Aorta (tissue), 5 donors: ENCODE measurements at regions of chr11 and their contacts with region 1.

Region 1: DNA sequence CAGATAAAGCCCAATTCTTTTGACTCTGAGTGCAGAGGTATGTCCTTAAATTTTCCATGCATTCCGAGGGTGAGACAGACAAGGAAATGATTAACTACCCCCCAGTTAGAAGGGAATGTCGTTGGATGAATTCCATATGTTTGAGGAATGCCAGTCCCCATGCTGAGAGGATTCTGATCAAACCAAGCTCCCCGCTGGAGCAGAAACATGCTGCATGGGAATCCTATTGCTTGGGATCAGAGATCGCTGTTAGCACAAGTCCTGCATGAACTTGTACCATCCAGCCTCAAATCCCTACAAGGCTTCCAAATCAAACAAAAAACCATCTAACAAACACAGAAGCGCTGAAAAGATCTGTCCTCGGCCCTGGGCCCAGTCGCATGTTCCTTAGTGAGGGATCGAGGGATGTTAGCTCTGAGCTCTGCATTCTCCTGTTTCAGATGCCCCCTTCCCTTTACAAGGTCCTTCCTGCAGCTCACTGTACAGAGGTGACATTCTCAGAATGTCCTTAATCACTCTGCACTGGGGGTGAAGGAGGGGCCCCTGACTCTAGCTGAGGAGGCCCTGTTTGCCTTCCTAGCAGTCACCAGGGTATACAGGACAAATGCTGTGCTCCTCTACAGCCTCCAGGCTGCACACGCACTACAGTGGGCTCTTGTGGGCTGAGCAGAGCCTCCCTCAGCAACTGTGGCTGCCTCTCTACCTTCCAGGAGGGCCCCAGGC is 353.4 kb downstream of the TENM4 start:
- DNase-seq: no peak
- ATAC-seq: no peak
- H3K4me3 ChIP-seq: no peak overlapping the region
- H3K27ac ChIP-seq: no peak overlapping the region
- H3K4me1 ChIP-seq: no peaks in the 10 kb centered on the region
- H3K27me3 ChIP-seq: no peaks in the 10 kb centered on the region

Region 2: DNA sequence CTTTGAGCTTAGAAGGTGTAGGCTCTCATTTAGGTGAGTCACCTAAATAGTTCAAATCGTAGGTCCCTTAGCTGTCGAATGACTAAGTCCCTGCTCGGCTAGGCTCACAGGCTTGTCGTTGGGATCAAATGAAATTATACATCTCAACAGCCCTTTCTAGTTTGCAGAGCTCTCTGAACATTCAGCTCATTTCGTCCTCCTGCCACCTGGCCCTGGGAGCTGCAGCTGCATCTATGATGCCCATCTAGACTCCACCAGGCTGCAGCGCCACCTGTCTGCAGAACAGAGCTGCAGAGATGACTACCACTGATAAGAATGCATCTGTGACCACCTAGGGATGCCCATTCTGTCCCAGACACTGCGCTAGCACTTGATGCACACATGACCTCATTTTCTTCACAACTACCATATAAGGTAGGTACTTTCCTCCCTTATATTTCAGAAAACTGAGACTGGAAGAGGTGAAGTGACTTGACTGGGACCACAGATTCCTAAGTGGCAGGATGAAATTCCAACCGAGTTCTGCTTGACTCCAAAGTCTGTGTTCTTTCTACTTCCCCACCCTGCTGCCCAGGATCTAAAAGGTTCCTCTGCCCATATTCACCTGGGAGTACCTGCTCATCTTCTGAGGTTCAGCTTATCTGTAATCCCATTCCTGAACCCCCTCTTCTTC is 371.6 kb before region 1 on chr11:
- intact Hi-C with region 1: loop called in 1 of 2 experiments (anchors 10 kb)
- DNase-seq: peak; percentile 75 to 89
- ATAC-seq: peak; percentile 75
- H3K4me3 ChIP-seq: no peak overlapping the region
- H3K27ac ChIP-seq: no peak overlapping the region
- H3K4me1 ChIP-seq: no peaks in the 10 kb centered on the region
- H3K27me3 ChIP-seq: no peaks in the 10 kb centered on the region